ENCODE measurements at regions of chr2 and their contacts with region 1.

Region 1: GRCh38 chr2:144516981-144517865 is 2.7 kb downstream of the ZEB2 start:
- DNase-seq: peak; percentile 98
- ATAC-seq: peak; percentile 60
- H3K4me3 ChIP-seq: peak overlapping the region; percentile 99
- H3K27ac ChIP-seq: peak overlapping the region; percentile 99
- H3K4me1 ChIP-seq: peaks cover 5% of the 10 kb centered on the region; the same call in 1 of the 2 replicates
- H3K27me3 ChIP-seq: no peaks in the 10 kb centered on the region
- CTCF ChIP-seq: no peak
- POLR2A ChIP-seq: no peak; the same call in none of the 2 replicates
- RAD21 ChIP-seq: peak; percentile 41

Region 2: GRCh38 chr2:144015655-144016245 is 501.5 kb before region 1 on chr2:
- CTCF ChIA-PET with region 1: no interaction called
- POLR2A ChIA-PET with region 1: no interaction called
- dilution Hi-C with region 1: no loop called
- in situ Hi-C with region 1: no loop called
- intact Hi-C with region 1: loop called (anchors 5 kb)
- DNase-seq: peak; percentile 98
- ATAC-seq: peak; percentile 94
- H3K4me3 ChIP-seq: no peak overlapping the region
- H3K27ac ChIP-seq: no peak overlapping the region
- H3K4me1 ChIP-seq: peaks cover 2% of the 10 kb centered on the region; the same call in 1 of the 2 replicates
- H3K27me3 ChIP-seq: no peaks in the 10 kb centered on the region
- CTCF ChIP-seq: no peak
- POLR2A ChIP-seq: no peak
- RAD21 ChIP-seq: no peak

Region 3: DNA sequence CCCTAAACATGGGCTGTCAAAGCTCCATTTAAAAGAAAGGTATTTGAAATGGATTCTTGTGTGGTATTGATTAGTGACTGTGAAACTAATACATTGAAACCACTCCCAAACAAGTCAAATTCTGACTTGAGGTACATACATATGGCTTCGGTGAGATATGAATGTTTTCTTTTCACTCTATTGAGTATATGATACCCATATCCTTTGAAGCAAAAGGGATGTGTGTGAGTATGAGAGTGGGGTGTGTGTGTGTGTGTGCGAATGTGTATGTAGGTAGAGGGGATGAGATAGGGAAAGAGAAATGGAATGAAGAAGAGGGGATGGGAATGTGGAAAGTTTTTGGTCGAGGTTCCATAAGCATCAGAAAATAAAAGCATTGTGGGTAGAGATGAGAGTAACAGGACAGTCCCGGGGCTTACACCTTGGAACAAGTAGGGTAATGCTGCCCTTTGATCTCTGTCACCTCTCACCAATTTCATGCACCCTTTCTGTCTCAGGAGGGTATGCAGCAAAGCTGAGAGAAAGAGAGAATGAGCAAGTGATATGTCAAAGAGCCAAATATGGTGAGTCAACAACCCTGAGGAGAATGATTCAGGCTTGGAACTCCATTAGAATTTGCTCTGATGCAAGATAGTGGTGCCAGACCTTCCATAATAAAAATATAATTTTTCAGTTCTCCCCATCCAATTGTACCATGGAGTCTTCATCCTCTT is 66.7 kb after region 1 on chr2:
- CTCF ChIA-PET with region 1: no interaction called
- POLR2A ChIA-PET with region 1: no interaction called
- dilution Hi-C with region 1: no loop called
- in situ Hi-C with region 1: no loop called
- intact Hi-C with region 1: no loop called
- DNase-seq: peak; percentile 90
- ATAC-seq: peak; percentile 93
- H3K4me3 ChIP-seq: no peak overlapping the region
- H3K27ac ChIP-seq: no peak overlapping the region
- H3K4me1 ChIP-seq: peaks cover 3% of the 10 kb centered on the region; the same call in 1 of the 2 replicates
- H3K27me3 ChIP-seq: no peaks in the 10 kb centered on the region
- CTCF ChIP-seq: no peak
- POLR2A ChIP-seq: no peak
- RAD21 ChIP-seq: no peak

Region 4: GRCh38 chr2:144942516-144943256 is 425.5 kb after region 1 on chr2:
- CTCF ChIA-PET with region 1: interaction called, 3 read pairs
- POLR2A ChIA-PET with region 1: no interaction called
- dilution Hi-C with region 1: no loop called
- in situ Hi-C with region 1: no loop called
- intact Hi-C with region 1: loop called (anchors 5 kb)
- DNase-seq: peak; percentile 81
- ATAC-seq: peak; percentile 65
- H3K4me3 ChIP-seq: no peak overlapping the region
- H3K27ac ChIP-seq: no peak overlapping the region
- H3K4me1 ChIP-seq: peaks cover 9% of the 10 kb centered on the region
- H3K27me3 ChIP-seq: no peaks in the 10 kb centered on the region
- CTCF ChIP-seq: no peak
- POLR2A ChIP-seq: no peak
- RAD21 ChIP-seq: no peak

Region 5: DNA sequence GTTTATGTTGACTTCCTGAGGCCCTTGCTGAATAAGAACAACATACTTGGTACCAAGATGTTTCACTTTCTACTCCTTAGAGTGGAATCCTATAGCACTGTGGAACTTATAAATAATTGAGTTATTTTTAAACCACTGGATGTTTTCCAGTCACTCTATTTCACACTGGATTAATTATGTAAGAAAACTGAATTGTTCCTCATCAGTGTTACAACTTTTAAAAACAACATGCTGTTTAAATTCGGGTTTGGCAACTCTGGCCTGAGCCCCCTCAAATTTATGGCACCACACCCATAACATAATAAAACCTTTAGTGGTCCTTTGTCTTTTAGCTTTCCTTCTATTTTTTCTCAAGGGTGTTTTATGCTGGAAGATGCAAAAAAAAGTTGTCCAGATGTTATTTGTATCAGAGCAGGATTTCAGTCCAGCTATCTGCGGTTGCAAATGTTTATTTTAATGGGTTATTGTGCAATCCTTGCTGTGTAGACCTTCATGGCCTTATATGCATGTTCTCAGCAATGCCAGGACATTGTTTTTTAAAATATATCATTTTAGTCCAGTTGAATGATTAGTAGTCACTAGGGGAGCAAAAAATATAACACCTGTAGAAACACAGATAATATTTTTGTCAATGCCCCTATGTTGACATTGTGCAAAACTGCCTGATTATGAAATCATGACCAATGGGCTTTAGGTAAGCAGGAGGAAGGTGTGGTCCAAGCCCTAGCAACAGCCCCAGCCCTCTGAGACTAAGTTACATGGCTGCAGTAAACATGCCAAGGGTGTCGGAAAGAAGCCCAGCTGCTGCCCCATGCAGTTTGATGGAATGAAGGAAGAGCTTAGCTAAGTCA is 640.7 kb after region 1 on chr2:
- CTCF ChIA-PET with region 1: no interaction called
- POLR2A ChIA-PET with region 1: no interaction called
- dilution Hi-C with region 1: no loop called
- in situ Hi-C with region 1: no loop called
- intact Hi-C with region 1: loop called (anchors 5 kb)
- DNase-seq: peak; percentile 95
- ATAC-seq: peak; percentile 89
- H3K4me3 ChIP-seq: no peak overlapping the region
- H3K27ac ChIP-seq: peak overlapping the region; percentile 52; the same call in 1 of the 2 replicates
- H3K4me1 ChIP-seq: peaks cover 6% of the 10 kb centered on the region; the same call in 1 of the 2 replicates
- H3K27me3 ChIP-seq: no peaks in the 10 kb centered on the region
- CTCF ChIP-seq: no peak
- POLR2A ChIP-seq: no peak
- RAD21 ChIP-seq: no peak

Region 6: GRCh38 chr2:145546091-145546490 is 1028.9 kb after region 1 on chr2:
- CTCF ChIA-PET with region 1: no interaction called
- POLR2A ChIA-PET with region 1: no interaction called
- dilution Hi-C with region 1: no loop called
- in situ Hi-C with region 1: no loop called
- intact Hi-C with region 1: loop called (anchors 5 kb)
- DNase-seq: peak; percentile 76
- ATAC-seq: peak; percentile 94
- H3K4me3 ChIP-seq: no peak overlapping the region
- H3K27ac ChIP-seq: peak overlapping the region; percentile 34; the same call in 1 of the 2 replicates
- H3K4me1 ChIP-seq: peaks cover 2% of the 10 kb centered on the region; the same call in 1 of the 2 replicates
- H3K27me3 ChIP-seq: no peaks in the 10 kb centered on the region
- CTCF ChIP-seq: peak; percentile 44
- POLR2A ChIP-seq: no peak
- RAD21 ChIP-seq: peak; percentile 39

Region 7: DNA sequence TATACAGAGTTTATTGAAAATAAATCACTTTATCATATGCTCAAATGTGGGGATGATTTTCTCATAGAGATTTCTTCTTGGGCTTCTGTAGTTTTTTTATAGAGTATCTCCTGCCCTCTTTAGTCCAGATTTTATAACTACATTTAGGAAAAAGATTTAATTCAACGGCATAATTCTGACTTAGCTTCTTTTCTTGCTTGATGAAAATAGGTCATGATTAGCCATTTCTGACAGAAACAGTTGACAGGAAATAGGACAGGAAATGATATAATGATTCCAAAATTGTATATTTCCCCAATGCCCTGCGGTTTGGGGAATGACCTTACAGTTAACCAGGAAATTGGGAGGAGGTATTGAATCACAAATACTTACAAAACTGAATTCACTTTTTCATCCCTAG is 1795.7 kb after region 1 on chr2:
- CTCF ChIA-PET with region 1: no interaction called
- POLR2A ChIA-PET with region 1: no interaction called
- dilution Hi-C with region 1: no loop called
- in situ Hi-C with region 1: loop called (anchors 25 kb)
- intact Hi-C with region 1: loop called (anchors 5 kb)
- DNase-seq: peak; percentile 48
- ATAC-seq: peak; percentile 65; the same call in 1 of the 2 replicates
- H3K4me3 ChIP-seq: no peak overlapping the region
- H3K27ac ChIP-seq: no peak overlapping the region; the same call in 1 of the 2 replicates
- H3K4me1 ChIP-seq: peaks cover 4% of the 10 kb centered on the region
- H3K27me3 ChIP-seq: no peaks in the 10 kb centered on the region
- CTCF ChIP-seq: peak; percentile 50
- POLR2A ChIP-seq: no peak
- RAD21 ChIP-seq: peak; percentile 53

Measured in IMR-90 (cell line).